CD8-positive, alpha-beta T cell (primary cell): ENCODE measurements at regions of chr2 and their contacts with region 1.

Region 1: DNA sequence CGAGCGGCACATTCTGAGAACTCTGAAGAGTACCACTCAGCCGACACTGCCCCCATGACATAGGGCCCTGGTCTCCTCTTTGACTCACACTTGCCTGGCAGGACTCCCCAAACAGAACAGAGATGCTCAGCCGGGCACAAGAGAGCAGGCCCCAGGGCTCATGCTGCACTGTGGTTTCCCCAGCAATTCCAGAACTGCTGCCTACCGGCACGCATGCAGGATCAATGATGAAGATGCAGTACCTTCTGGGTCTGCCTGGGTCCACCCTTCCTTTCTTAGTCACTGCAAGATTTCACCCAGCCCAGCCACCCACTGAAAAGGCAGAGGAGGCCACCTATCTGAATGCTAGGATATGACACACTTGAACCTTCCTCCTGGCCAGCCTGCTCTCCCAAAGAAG is 49.4 kb downstream of the BCL11A start:
- DNase-seq: no peak
- ATAC-seq: no peak
- H3K4me3 ChIP-seq: no peak overlapping the region
- H3K4me3 Mint-ChIP-seq: no peak overlapping the region
- H3K27ac ChIP-seq: no peak overlapping the region
- H3K27ac Mint-ChIP-seq: no peak overlapping the region
- H3K4me1 ChIP-seq: no peaks in the 10 kb centered on the region
- H3K4me1 Mint-ChIP-seq: peaks cover 5% of the 10 kb centered on the region
- H3K27me3 ChIP-seq: no peaks in the 10 kb centered on the region
- H3K27me3 Mint-ChIP-seq: peaks cover 3% of the 10 kb centered on the region
- CTCF ChIP-seq: no peak

Region 2: GRCh38 chr2:59926731-59927130 is 577.3 kb before region 1 on chr2:
- CTCF ChIA-PET with region 1: no interaction called
- POLR2A ChIA-PET with region 1: no interaction called
- intact Hi-C with region 1: loop called in 1 of 2 experiments (anchors 5 kb)
- DNase-seq: no peak
- ATAC-seq: no peak
- H3K4me3 ChIP-seq: no peak overlapping the region
- H3K4me3 Mint-ChIP-seq: no peak overlapping the region
- H3K27ac ChIP-seq: no peak overlapping the region
- H3K27ac Mint-ChIP-seq: no peak overlapping the region
- H3K4me1 ChIP-seq: no peaks in the 10 kb centered on the region
- H3K4me1 Mint-ChIP-seq: no peaks in the 10 kb centered on the region
- H3K27me3 ChIP-seq: no peaks in the 10 kb centered on the region
- H3K27me3 Mint-ChIP-seq: no peaks in the 10 kb centered on the region
- CTCF ChIP-seq: no peak

Region 3: DNA sequence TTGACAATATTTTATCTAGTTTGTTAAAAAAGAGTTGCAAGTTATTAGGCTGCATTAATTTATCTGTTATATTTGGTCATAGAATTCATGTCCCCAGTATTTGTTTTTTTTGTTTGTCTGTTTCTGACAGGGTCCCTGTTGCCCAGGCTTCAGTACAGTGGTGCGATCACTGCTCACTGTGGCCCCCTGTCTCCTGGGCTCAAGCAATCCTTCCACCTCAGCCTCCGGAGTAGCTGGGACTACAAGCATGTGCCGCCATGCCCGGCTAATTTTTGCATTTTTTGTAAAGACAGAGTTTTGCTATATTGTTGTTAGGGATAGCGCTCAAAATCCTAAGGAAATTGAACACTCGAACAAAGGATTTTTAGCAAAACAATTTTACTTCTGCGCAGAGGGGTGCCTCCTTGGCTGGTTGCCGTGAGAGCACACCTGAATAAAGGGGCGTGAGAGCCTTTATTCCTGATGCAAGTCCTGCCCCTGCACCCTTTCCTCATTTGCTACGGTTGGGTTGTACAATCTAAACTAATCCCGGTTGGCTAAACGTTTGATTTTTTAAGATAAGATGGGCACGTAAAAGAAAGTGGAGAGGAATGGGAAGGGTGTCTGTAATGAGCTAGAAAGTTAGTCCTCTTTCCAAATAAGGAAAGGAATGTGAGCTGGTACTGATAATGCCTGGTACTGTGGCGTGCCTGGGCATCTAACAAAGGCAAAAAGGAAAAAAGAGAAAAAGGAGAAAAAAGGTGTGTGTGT is 1466.9 kb after region 1 on chr2:
- CTCF ChIA-PET with region 1: no interaction called
- POLR2A ChIA-PET with region 1: no interaction called
- intact Hi-C with region 1: no loop called
- DNase-seq: no peak
- ATAC-seq: no peak
- H3K4me3 ChIP-seq: no peak overlapping the region
- H3K4me3 Mint-ChIP-seq: no peak overlapping the region
- H3K27ac ChIP-seq: no peak overlapping the region
- H3K27ac Mint-ChIP-seq: no peak overlapping the region
- H3K4me1 ChIP-seq: no peaks in the 10 kb centered on the region
- H3K4me1 Mint-ChIP-seq: peaks cover 4% of the 10 kb centered on the region
- H3K27me3 ChIP-seq: no peaks in the 10 kb centered on the region
- H3K27me3 Mint-ChIP-seq: no peaks in the 10 kb centered on the region
- CTCF ChIP-seq: no peak